ENCODE measurements at regions of chrX and their contacts with region 1.

Region 1: DNA sequence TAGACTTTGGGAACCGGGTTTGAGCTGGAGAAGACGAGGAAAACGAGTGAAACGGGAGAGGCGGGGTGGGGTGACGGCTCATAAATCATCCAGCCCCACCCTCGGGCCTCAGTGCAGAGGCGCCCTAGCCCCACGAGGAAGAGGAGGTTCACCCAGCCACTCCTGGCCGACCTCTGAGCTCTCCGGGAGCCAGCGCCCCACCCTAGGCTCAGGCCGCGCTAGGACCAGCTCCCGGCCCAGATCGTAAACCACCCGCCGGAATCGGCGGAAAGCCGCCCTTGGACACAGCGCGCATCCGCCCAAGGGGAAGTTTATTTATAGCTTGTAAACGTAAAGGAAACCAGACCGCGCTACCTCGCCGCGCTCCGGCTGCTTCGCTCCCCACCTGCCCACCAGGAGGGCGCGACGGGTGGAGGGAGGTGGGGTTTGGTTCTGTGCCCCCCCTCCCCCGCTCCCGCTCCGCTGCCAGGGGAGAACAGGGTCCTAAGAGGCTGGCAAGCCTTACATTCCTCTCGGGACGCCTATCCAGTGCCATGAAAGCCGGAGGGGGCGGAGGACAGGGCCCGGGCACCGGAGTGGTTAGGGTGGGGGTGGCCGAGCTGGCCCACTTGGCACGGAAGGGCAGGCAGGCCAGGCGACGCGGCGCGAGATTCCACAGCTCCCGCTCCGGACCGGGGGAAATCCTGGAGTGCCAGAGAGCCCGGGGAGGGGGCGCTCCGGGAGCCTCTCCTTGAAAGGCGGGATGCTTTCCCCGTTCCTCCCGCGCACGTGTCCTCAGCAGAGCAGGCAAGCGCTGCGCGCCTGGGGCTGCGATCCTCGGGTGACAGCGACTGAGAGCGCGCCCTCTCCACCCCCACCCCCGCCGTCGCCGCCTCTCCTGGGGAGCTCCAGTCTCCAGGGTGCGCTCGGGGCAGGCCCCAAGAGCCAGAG is 84.2 kb downstream of the BCOR start:
- DNase-seq: peak; percentile 68
- H3K4me3 ChIP-seq: peak overlapping the region; percentile 4 to 41 (median 33)
- H3K27ac ChIP-seq: peak overlapping the region; percentile 89
- H3K4me1 ChIP-seq: peaks cover 26% of the 10 kb centered on the region
- H3K27me3 ChIP-seq: no peaks in the 10 kb centered on the region
- CTCF ChIP-seq: peak in 1 of 2 donors; percentile 11
- POLR2A ChIP-seq: no peak

Region 2: GRCh38 chrX:39736216-39737211 is 277.0 kb before region 1 on chrX:
- CTCF ChIA-PET with region 1: no interaction called
- POLR2A ChIA-PET with region 1: no interaction called
- dilution Hi-C with region 1: no loop called
- intact Hi-C with region 1: loop called (anchors 2 kb)
- DNase-seq: peak; percentile 94
- H3K4me3 ChIP-seq: no peak overlapping the region
- H3K27ac ChIP-seq: peak overlapping the region; percentile 92
- H3K4me1 ChIP-seq: peaks cover 15% of the 10 kb centered on the region
- H3K27me3 ChIP-seq: no peaks in the 10 kb centered on the region
- CTCF ChIP-seq: no peak
- POLR2A ChIP-seq: peak; percentile 60

Region 3: GRCh38 chrX:39859991-39860861 is 153.3 kb before region 1 on chrX:
- CTCF ChIA-PET with region 1: no interaction called
- POLR2A ChIA-PET with region 1: no interaction called
- dilution Hi-C with region 1: no loop called
- intact Hi-C with region 1: loop called (anchors 5 kb)
- DNase-seq: peak; percentile 81
- H3K4me3 ChIP-seq: no peak overlapping the region
- H3K27ac ChIP-seq: peak overlapping the region; percentile 73
- H3K4me1 ChIP-seq: peaks cover 26% of the 10 kb centered on the region
- H3K27me3 ChIP-seq: no peaks in the 10 kb centered on the region
- CTCF ChIP-seq: no peak
- POLR2A ChIP-seq: no peak

Region 4: DNA sequence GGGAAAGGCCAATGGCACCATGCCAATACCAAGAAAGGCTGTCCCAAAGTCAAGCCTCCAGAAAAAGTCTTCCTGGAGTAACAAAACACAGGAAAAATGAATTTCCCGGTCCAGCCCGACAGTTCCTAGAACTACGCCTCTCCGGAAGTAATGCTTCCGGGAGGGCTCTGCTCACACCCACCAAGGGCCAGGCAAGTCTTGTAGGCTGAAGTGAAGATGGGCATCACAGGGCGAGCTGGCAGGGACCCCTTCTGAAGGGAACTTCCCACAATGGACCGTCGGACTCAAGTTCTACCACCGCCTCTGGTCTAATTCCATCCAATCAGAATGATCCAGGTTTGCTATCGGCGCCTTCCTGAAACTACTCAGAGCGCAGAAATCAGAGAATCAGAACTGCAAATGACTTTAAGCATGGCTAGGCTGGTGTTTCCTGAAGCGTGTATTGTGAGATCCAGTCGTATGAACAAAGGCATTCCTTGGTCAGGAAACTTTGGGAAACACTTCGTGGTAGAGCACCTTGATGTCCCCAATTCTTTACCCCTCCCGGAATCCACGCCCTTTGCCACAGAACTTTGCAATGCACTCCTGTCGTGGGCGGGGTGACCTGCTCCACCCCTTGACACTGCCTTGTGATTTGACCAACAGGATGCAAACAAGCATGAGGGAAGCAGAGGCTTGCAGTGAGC is 43.6 kb before region 1 on chrX:
- CTCF ChIA-PET with region 1: interaction called, 4 read pairs
- POLR2A ChIA-PET with region 1: no interaction called
- dilution Hi-C with region 1: no loop called
- intact Hi-C with region 1: loop called (anchors 2 kb)
- DNase-seq: peak; percentile 35
- H3K4me3 ChIP-seq: no peak overlapping the region
- H3K27ac ChIP-seq: peak overlapping the region; percentile 5
- H3K4me1 ChIP-seq: peaks cover 20% of the 10 kb centered on the region
- H3K27me3 ChIP-seq: no peaks in the 10 kb centered on the region
- CTCF ChIP-seq: no peak
- POLR2A ChIP-seq: no peak

Region 5: DNA sequence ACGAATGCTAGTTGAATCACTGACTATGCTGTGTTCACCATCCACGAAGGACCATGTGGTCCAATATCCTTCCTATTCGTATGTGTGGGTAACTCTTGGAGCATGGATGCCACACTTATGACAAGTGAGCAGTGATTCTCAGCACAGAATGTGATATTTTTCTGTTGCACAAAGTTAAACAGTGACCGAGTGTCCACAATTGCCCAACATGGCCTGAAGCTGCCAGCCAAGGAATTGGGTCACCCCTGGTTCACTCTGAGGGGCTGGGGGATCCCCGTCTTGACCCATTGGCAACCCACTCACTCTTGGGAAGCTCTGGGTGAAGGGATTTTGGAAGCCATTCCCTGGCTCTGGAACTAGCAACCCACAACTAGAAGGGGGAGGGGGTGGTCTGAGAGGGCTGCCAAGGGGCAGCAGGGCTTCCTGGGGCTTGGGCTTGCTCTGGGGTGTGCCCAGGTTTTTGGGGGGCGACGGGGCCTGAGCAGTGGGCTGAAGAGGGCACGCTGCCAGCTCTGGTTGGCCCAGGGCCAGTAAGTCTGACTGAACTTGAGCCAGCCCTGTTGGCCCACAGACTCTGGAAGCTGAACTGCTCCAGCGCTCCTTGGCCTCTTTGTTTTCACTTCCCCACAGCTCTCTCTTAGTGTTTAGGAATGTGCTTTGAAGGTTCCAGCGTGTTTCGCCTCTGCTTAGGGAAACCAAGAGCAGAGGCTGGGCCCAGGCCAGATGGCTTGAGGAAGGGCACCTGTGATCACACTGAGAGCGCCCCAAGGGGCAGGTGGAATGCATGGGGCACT is 127.4 kb after region 1 on chrX:
- CTCF ChIA-PET with region 1: no interaction called
- POLR2A ChIA-PET with region 1: no interaction called
- dilution Hi-C with region 1: no loop called
- intact Hi-C with region 1: no loop called
- DNase-seq: no peak
- H3K4me3 ChIP-seq: no peak overlapping the region
- H3K27ac ChIP-seq: no peak overlapping the region
- H3K4me1 ChIP-seq: peaks cover 7% of the 10 kb centered on the region
- H3K27me3 ChIP-seq: no peaks in the 10 kb centered on the region
- CTCF ChIP-seq: no peak
- POLR2A ChIP-seq: no peak

Region 6: DNA sequence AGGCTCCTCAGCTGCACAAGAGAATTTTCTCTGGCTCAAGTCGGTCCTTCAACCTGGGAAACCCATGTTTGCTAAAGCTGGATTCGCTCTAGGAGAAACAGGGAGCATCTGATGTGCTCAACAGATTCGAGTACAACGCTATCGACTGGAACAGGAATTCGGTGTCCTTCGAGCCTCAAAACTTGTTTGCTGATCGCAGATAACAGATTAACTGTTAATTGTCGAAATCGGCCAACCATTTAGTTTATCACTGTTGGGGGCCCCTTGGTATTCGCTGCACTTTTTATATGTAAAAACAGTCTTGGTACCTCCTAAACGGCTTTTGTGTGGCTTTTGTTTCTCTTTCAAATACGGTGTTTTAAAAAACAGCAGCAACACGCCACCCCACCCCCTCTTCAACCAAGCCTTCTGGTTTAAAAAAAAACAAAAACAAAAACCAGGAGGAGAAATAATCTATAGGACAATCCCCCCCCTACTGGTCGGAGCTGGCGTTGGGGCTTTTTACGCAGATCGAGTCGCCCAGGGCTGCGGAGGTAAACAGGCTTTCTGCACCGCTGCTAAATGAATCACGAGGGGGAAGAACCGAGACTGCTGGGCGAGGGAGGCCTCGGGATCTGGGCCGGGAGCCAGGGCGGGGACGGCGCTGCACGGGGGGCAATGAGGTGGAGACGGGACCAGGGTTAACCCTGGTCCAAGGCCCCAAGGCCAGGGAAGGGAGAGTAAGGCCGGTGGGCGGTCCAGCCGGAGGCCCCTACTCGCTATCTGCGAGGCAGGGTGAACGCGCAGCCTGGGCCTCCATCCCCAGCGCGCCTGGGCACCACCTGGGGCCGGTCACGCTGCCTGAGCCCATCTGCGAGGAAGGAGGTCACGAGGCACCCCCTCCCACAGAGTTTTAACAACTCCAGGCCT is 155.9 kb after region 1 on chrX:
- CTCF ChIA-PET with region 1: no interaction called
- POLR2A ChIA-PET with region 1: no interaction called
- dilution Hi-C with region 1: no loop called
- intact Hi-C with region 1: loop called (anchors 1 kb)
- DNase-seq: peak; percentile 78
- H3K4me3 ChIP-seq: no peak overlapping the region
- H3K27ac ChIP-seq: no peak overlapping the region
- H3K4me1 ChIP-seq: peaks cover 33% of the 10 kb centered on the region
- H3K27me3 ChIP-seq: no peaks in the 10 kb centered on the region
- CTCF ChIP-seq: peak; percentile 52 to 56
- POLR2A ChIP-seq: no peak

Region 7: DNA sequence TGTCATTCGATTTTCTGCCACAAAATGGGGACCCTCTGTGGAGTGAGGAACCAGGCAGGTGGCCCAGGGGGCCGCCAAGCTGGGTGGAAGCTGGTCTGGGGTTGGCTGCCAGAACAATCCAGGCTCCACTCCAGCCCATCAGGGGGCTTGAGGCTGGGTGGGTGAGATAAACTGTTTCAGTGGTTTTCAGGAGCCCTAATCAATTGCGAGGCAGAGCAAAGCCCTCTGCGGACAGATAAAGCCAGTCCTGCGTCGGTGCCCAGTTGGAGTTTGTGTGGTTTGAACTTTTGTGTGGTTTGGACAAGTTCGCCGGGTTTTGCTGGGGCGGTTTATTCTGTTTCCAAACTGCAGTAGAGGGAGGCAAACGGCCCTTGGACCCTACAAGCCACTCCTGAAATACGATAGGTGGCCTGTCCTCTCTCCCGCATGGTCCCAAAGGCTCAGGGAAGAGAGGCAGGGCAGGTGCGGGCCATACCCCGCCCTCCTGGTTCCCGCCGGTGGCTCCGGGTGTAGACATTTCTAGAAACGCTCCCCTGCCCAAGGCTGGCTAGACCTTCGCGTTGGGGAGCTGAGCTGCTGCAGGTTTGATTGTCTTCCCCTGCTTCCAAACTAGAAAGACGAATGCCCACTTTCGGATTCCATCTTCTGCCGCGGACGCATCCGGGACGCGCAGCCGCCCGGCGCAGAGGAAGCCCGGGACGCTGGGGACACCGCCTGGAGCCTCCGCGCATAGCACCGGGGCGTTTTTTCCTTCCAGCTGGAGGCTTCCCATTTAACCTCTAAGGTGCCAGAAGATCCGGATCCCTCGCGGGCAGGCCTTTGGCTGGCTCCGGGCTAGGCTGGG is 253.2 kb after region 1 on chrX:
- CTCF ChIA-PET with region 1: interaction called, 4 read pairs
- POLR2A ChIA-PET with region 1: interaction called, 3 read pairs
- dilution Hi-C with region 1: no loop called
- intact Hi-C with region 1: loop called (anchors 2 kb)
- DNase-seq: peak; percentile 45
- H3K4me3 ChIP-seq: peak overlapping the region in 2 of 3 experiments; percentile 10 to 38
- H3K27ac ChIP-seq: peak overlapping the region; percentile 37
- H3K4me1 ChIP-seq: peaks cover 20% of the 10 kb centered on the region
- H3K27me3 ChIP-seq: no peaks in the 10 kb centered on the region
- CTCF ChIP-seq: peak; percentile 68 to 71
- POLR2A ChIP-seq: no peak

Measured in endothelial cell of umbilical vein (primary cell).